ENCODE measurements at regions of chr9 and their contacts with region 1.

Region 1: DNA sequence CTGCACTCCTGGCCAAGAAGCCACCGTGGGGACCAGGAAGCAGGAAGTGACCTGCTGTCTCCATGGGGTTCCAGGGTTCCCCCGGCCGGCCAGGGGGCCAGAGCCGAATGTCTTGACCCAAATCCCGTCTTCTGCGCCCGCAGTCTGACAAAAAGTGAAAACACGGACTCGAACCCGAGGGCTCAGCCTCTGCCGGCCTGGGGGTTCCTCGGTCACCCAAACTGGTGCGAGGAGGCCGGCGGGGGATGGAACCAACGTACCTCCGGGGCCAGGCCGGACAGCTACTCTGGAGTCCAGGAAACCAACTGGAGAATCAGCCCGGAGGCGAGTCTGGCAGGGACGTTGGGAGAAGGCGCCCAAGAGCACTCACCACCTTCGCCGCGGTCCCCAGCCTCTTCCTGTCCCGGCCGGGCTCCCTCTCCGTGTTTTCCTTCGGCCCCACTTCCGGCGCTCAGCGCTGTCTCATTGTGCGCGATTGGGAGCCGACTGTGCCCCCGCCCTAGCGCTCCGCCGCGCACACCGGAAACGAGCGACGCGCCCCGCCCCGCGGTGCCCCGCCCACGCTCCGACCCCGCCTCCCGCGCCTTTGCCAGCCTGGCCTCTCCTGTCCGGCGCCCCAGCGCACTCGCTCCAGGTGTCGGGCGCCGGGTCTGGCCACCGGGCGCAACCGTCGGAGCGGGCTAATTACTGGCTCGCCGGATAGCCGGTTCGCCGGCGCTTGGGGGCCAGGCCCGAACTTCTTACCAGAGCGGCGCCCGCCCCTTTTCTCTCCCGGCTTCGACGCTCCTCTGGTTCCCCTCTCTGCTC is at the start of gene TUT7:
- DNase-seq: peak; percentile 94
- ATAC-seq: peak; percentile 91
- H3K4me3 ChIP-seq: peak within 1 kb of the TSS; percentile 75 to 93 (median 87)
- H3K4me3 Mint-ChIP-seq: peak within 1 kb of the TSS; percentile 95
- H3K27ac ChIP-seq: peak within 1 kb of the TSS; percentile 74 to 89
- H3K27ac Mint-ChIP-seq: peak within 1 kb of the TSS; percentile 90
- H3K4me1 ChIP-seq: peaks cover 37 to 40% of the 10 kb centered on the region in 2 donors
- H3K4me1 Mint-ChIP-seq: peaks cover 42% of the 10 kb centered on the region
- H3K27me3 ChIP-seq: no peaks in the 10 kb centered on the region
- H3K27me3 Mint-ChIP-seq: no peaks in the 10 kb centered on the region
- CTCF ChIP-seq: no peak
- total RNA-seq, gene TUT7: 70.7 and 75.4 TPM in 2 replicates

Region 2: DNA sequence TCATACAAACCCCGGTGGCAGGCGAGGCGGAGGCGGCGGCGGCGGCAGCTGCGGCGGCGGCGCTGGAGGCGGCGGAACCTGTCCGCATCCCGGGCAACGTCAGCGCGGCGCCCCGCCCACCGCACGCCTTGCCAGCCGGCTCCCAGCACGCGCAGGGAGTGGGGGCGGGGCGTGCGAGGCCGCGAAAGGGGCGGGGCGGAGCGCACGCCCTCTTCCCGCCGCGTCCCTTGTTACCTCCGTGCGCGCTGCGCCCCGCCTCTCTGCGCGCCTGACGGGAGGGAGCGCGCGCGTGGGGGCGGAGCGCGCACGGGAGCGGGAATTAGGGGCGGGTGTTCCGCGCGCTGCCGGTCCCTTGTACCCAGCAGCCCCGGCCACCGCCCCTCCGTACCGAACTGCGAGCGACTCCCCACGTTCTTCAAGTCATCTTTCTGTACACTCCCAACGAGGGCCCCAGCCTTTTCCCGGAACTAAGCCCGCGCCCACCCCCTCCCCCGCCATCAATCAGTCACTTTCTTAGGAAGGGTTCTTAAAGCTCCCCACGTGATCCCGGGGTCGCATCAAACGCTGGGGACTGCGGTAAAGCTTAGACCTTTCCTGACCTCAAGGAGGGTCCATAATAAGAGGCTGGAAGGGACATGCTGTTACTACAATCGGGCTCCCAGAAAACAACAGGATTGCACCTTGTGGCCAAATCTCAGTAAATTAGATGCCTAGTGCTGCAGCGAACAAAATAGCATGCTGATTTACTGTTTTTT is 612.2 kb before region 1 on chr9 and contains the start of gene AGTPBP1:
- CTCF ChIA-PET with region 1: no interaction called
- POLR2A ChIA-PET with region 1: no interaction called
- intact Hi-C with region 1: loop called (anchors 1 kb)
- DNase-seq: peak; percentile 97
- ATAC-seq: peak; percentile 92
- H3K4me3 ChIP-seq: peak within 1 kb of the TSS; percentile 80 to 91 (median 82)
- H3K4me3 Mint-ChIP-seq: peak within 1 kb of the TSS; percentile 99
- H3K27ac ChIP-seq: peak within 1 kb of the TSS; percentile 76 to 96
- H3K27ac Mint-ChIP-seq: peak within 1 kb of the TSS; percentile 96
- H3K4me1 ChIP-seq: peaks cover 9 to 11% of the 10 kb centered on the region in 2 donors
- H3K4me1 Mint-ChIP-seq: peaks cover 21% of the 10 kb centered on the region
- H3K27me3 ChIP-seq: peaks cover 0 to 3% (median 0%) of the 10 kb centered on the region in 4 experiments
- H3K27me3 Mint-ChIP-seq: peaks cover 7% of the 10 kb centered on the region
- CTCF ChIP-seq: no peak
- total RNA-seq, gene AGTPBP1: 33.1 and 35.4 TPM in 2 replicates

Region 3: DNA sequence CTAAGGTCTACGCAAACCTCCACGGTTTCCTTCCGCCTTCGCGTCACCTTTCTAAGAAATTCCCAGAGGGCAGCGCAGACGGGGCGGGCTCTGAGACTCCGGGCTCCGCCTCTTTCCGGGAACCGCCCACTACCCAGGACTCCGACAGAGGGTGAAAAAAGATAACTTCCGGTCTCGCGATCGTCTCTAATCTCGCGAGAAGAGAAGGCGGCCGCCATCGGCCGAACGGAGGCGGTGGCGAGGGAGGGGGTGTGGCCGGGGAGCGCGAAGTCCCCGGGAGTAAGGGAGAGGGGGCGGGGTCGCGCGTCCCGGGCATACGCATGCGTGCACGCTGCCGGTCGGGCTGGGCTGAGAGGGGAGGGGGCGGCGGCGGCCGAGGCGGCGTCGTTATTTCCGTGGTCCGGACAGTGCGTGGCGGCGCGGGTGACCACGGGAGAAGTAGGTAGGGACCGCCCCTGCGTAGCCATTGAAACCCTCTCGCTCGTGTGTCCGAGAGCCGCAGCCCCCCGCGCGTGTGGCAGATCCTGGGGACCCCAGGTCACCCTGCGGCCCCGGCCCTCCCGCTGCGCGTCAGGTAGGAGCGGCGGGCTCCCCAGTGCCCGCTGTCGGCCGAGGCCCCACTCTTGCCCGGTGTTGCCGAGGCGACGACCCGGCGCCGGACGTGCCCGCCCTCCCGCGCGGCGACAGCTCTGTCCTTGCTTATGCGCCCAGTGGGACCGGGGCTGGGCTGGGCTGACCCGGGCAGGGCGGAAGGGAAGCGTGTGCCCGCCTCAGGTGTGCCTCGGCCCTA is 413.2 kb before region 1 on chr9 and contains the start of gene NAA35:
- CTCF ChIA-PET with region 1: no interaction called
- POLR2A ChIA-PET with region 1: no interaction called
- intact Hi-C with region 1: loop called (anchors 1 kb)
- DNase-seq: peak; percentile 100
- ATAC-seq: peak; percentile 85
- H3K4me3 ChIP-seq: peak within 1 kb of the TSS; percentile 59 to 94 (median 85)
- H3K4me3 Mint-ChIP-seq: peak within 1 kb of the TSS; percentile 92
- H3K27ac ChIP-seq: peak within 1 kb of the TSS; percentile 79 to 90
- H3K27ac Mint-ChIP-seq: peak within 1 kb of the TSS; percentile 93
- H3K4me1 ChIP-seq: peaks cover 22 to 26% of the 10 kb centered on the region in 2 donors
- H3K4me1 Mint-ChIP-seq: peaks cover 27% of the 10 kb centered on the region
- H3K27me3 ChIP-seq: peaks cover 0 to 7% (median 0%) of the 10 kb centered on the region in 4 experiments
- H3K27me3 Mint-ChIP-seq: peaks cover 10% of the 10 kb centered on the region
- CTCF ChIP-seq: no peak
- total RNA-seq, gene NAA35: 26.1 and 26.2 TPM in 2 replicates

Region 4: DNA sequence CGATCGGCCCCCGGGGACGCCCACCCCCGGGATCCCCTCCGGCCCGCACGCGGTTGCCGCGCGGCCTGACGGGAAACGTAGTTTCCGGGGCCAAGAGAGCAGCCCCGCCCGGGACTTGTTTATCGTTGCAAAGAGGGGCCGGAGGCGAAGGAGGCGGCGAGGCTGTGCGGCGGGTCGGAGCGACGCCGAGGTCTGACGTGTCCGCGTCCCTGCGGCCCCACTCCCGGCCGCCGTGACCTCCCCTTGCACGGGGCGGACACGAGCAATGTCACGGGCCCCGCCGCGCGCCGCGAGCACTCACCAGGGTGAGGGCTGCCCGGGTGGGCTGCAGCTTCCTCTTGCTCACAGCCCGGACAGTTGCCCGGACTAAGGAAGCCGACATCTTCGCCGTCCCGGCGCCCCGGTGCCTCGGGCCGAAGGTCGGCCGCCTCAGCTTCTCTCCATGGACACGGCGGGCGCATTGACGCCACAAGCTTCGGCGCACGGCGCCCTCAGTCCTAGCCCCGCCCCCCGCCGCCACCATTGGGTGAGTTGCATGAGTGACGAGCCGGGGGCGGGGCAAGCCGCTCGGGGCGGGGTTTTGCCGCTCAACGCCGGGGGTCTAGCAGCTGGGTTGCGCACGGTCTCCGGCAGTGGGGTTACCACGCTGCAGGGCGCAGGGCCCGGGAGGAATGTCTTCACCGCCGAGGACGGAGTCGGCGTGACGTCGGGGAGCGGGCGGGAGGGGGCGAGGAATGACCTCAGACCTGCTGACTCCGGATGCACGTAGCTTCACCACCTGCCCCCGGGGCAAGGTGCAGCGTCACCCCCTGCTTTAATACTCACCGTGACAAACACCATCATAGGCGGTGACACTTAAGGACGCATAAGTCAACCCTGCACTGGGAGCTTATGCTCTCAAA is 71.9 kb before region 1 on chr9 and contains the start of gene ISCA1:
- CTCF ChIA-PET with region 1: no interaction called
- POLR2A ChIA-PET with region 1: interaction called, 3 read pairs
- intact Hi-C with region 1: loop called (anchors 1 kb)
- DNase-seq: peak; percentile 97
- ATAC-seq: peak; percentile 85
- H3K4me3 ChIP-seq: peak within 1 kb of the TSS; percentile 82 to 95 (median 89)
- H3K4me3 Mint-ChIP-seq: peak within 1 kb of the TSS; percentile 91
- H3K27ac ChIP-seq: peak within 1 kb of the TSS; percentile 94 to 96
- H3K27ac Mint-ChIP-seq: peak within 1 kb of the TSS; percentile 97
- H3K4me1 ChIP-seq: peaks cover 11 to 14% of the 10 kb centered on the region in 2 donors
- H3K4me1 Mint-ChIP-seq: peaks cover 27% of the 10 kb centered on the region
- H3K27me3 ChIP-seq: no peaks in the 10 kb centered on the region
- H3K27me3 Mint-ChIP-seq: no peaks in the 10 kb centered on the region
- CTCF ChIP-seq: no peak
- total RNA-seq, gene ISCA1: 29.4 and 32.7 TPM in 2 replicates

Region 5: DNA sequence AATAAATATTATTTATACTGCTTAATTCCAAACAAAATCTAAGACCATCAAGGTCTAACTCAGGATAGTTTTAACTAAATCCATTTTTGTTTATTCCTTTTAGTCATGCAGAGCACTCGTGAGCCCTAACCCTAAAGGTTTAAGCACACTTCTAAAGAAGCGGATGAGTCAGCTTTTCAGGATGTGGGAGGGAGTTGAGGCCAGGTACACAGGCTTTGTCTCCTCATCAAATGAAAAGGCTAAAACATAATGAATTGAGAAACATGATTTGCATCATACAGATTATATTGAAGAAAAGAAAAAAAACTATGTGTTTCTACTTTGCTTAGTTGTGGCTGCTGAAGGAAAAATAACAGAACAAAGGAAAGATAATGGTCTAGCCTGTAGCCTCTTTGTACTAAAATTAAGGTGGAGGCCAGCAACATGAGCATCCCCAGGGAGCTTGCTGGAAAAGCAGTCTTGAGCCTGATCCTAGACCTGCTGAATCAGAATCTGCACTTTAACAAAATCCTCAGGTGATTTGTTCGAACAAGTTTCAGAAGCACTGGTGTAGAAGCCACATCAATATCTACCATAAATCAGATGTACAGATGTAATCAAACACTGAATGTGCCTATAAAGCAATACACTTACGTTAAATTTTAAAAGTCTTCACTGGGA is 50.8 kb before region 1 on chr9:
- CTCF ChIA-PET with region 1: interaction called, 10 read pairs
- POLR2A ChIA-PET with region 1: no interaction called
- intact Hi-C with region 1: no loop called
- DNase-seq: no peak
- ATAC-seq: no peak
- H3K4me3 ChIP-seq: no peak overlapping the region
- H3K4me3 Mint-ChIP-seq: no peak overlapping the region
- H3K27ac ChIP-seq: no peak overlapping the region
- H3K27ac Mint-ChIP-seq: no peak overlapping the region
- H3K4me1 ChIP-seq: no peaks in the 10 kb centered on the region
- H3K4me1 Mint-ChIP-seq: no peaks in the 10 kb centered on the region
- H3K27me3 ChIP-seq: no peaks in the 10 kb centered on the region
- H3K27me3 Mint-ChIP-seq: no peaks in the 10 kb centered on the region
- CTCF ChIP-seq: no peak

Region 6: GRCh38 chr9:86337469-86338108 is 16.6 kb before region 1 on chr9:
- CTCF ChIA-PET with region 1: no interaction called
- POLR2A ChIA-PET with region 1: no interaction called
- intact Hi-C with region 1: loop called (anchors 1 kb)
- DNase-seq: peak; percentile 44
- ATAC-seq: peak; percentile 45
- H3K4me3 ChIP-seq: peak overlapping the region in 4 of 5 experiments; percentile 17 to 53 (median 30)
- H3K4me3 Mint-ChIP-seq: peak overlapping the region; percentile 72
- H3K27ac ChIP-seq: peak overlapping the region; percentile 19 to 57
- H3K27ac Mint-ChIP-seq: peak overlapping the region; percentile 12
- H3K4me1 ChIP-seq: peaks cover 18 to 20% of the 10 kb centered on the region in 2 donors
- H3K4me1 Mint-ChIP-seq: peaks cover 40% of the 10 kb centered on the region
- H3K27me3 ChIP-seq: no peaks in the 10 kb centered on the region
- H3K27me3 Mint-ChIP-seq: no peaks in the 10 kb centered on the region
- CTCF ChIP-seq: no peak

Region 7: GRCh38 chr9:86948074-86948929 is 594.1 kb after region 1 on chr9:
- CTCF ChIA-PET with region 1: no interaction called
- POLR2A ChIA-PET with region 1: no interaction called
- intact Hi-C with region 1: loop called (anchors 5 kb)
- DNase-seq: peak; percentile 73
- ATAC-seq: peak; percentile 64
- H3K4me3 ChIP-seq: peak overlapping the region; percentile 45 to 73 (median 58)
- H3K4me3 Mint-ChIP-seq: peak overlapping the region; percentile 88
- H3K27ac ChIP-seq: no peak overlapping the region
- H3K27ac Mint-ChIP-seq: peak overlapping the region; percentile 26
- H3K4me1 ChIP-seq: peaks cover 15% of the 10 kb centered on the region in 2 donors
- H3K4me1 Mint-ChIP-seq: peaks cover 18% of the 10 kb centered on the region
- H3K27me3 ChIP-seq: peaks cover 0 to 23% (median 18%) of the 10 kb centered on the region in 4 experiments
- H3K27me3 Mint-ChIP-seq: peaks cover 14% of the 10 kb centered on the region
- CTCF ChIP-seq: peak; percentile 78